ENCODE measurements at regions of chr10 and their contacts with region 1.

Region 1: DNA sequence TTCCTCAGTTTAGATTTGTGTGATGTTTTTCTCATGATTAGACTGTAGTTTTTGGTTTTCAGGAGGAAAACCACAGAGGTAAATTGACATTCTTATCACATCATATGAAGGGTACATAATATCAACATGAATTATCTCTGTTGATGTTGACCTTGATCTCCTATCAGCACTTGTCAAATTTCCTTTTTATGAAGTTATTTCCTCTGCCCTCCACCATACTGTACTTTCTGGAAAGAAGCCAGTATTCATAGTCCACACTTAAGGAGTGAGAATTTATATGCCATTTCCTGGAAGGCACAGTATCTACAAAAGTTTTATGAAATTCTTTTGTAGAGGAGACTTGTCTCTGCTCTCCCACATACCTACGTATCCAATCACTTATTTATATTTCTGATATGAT is 807.2 kb upstream of the MBL2 start:
- DNase-seq: no peak
- H3K4me3 ChIP-seq: no peak overlapping the region
- H3K27ac ChIP-seq: no peak overlapping the region
- H3K4me1 ChIP-seq: no peaks in the 10 kb centered on the region
- H3K27me3 ChIP-seq: no peaks in the 10 kb centered on the region
- CTCF ChIP-seq: no peak

Region 2: GRCh38 chr10:52639652-52640051 is 940.1 kb before region 1 on chr10:
- CTCF ChIA-PET with region 1: no interaction called
- dilution Hi-C with region 1: no loop called
- in situ Hi-C with region 1: no loop called
- intact Hi-C with region 1: no loop called
- DNase-seq: peak; percentile 33
- H3K4me3 ChIP-seq: no peak overlapping the region
- H3K27ac ChIP-seq: no peak overlapping the region
- H3K4me1 ChIP-seq: no peaks in the 10 kb centered on the region
- H3K27me3 ChIP-seq: peaks cover 2% of the 10 kb centered on the region
- CTCF ChIP-seq: no peak

Region 3: DNA sequence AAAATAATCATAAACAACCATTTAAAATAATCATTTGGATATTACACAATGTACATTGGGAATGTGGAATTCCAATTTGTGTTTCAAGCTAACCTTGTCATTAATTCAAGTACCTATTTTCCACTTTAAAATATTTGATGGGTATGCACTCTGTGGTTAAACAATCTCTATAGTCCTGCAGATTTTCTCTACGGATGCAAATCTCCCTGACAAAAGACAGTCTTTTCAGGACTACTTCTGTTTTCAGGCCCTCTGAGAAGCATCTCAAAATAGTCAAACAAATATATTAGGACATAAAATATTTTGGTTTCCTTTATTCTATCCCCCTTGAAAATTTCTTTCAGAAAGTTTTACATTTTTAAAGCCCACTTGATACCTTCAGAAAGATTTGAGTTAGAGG is 71.6 kb before region 1 on chr10:
- CTCF ChIA-PET with region 1: no interaction called
- dilution Hi-C with region 1: loop called (anchors 5 kb)
- in situ Hi-C with region 1: no loop called
- intact Hi-C with region 1: no loop called
- DNase-seq: no peak
- H3K4me3 ChIP-seq: no peak overlapping the region
- H3K27ac ChIP-seq: no peak overlapping the region
- H3K4me1 ChIP-seq: no peaks in the 10 kb centered on the region
- H3K27me3 ChIP-seq: no peaks in the 10 kb centered on the region
- CTCF ChIP-seq: no peak